Activated naive CD4-positive, alpha-beta T cell treated with anti-CD3 and anti-CD28 coated beads for 36 hours (primary cell): ENCODE measurements at regions of chr5 and their contacts with region 1.

Region 1: GRCh38 chr5:126676195-126676624 is 75.5 kb downstream of the PHAX start:
- DNase-seq: peak; percentile 85
- H3K4me3 Mint-ChIP-seq: no peak overlapping the region
- H3K27ac Mint-ChIP-seq: peak overlapping the region; percentile 67
- H3K4me1 Mint-ChIP-seq: peaks cover 4% of the 10 kb centered on the region
- H3K27me3 Mint-ChIP-seq: no peaks in the 10 kb centered on the region

Region 2: GRCh38 chr5:126686451-126687126 is 10.4 kb after region 1 on chr5:
- CTCF ChIA-PET with region 1: interaction called, 15 read pairs
- intact Hi-C with region 1: no loop called
- DNase-seq: no peak
- H3K4me3 Mint-ChIP-seq: no peak overlapping the region
- H3K27ac Mint-ChIP-seq: no peak overlapping the region
- H3K4me1 Mint-ChIP-seq: peaks cover 37% of the 10 kb centered on the region
- H3K27me3 Mint-ChIP-seq: no peaks in the 10 kb centered on the region

Region 3: DNA sequence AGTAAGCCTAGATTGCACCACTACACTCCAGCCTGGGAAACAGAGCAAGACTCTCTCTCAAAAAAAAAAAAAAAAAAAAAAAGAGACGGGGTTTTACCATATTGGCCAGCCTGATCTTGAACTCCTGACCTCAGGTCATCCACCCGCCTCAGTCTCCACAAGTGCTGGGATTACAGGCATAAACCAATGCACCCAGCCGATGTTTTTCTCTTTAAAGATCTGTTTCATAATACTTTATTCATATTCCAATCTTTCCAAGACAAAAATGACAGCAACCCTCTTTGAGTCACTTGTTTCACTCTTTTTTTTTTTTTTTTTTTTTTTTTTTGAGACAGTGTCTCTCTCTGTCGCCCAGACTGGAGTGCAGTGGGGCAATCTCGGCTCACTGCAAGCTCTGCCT is 87.2 kb after region 1 on chr5:
- CTCF ChIA-PET with region 1: interaction called, 3 read pairs
- intact Hi-C with region 1: loop called (anchors 5 kb)
- DNase-seq: no peak
- H3K4me3 Mint-ChIP-seq: no peak overlapping the region
- H3K27ac Mint-ChIP-seq: peak overlapping the region; percentile 53
- H3K4me1 Mint-ChIP-seq: peaks cover 44% of the 10 kb centered on the region
- H3K27me3 Mint-ChIP-seq: no peaks in the 10 kb centered on the region

Region 4: GRCh38 chr5:126852091-126852571 is 175.9 kb after region 1 on chr5:
- CTCF ChIA-PET with region 1: interaction called, 5 read pairs
- intact Hi-C with region 1: loop called (anchors 1 kb)
- DNase-seq: peak; percentile 24
- H3K4me3 Mint-ChIP-seq: no peak overlapping the region
- H3K27ac Mint-ChIP-seq: peak overlapping the region; percentile 81
- H3K4me1 Mint-ChIP-seq: peaks cover 50% of the 10 kb centered on the region
- H3K27me3 Mint-ChIP-seq: no peaks in the 10 kb centered on the region

Region 5: GRCh38 chr5:127313847-127314473 is 637.8 kb after region 1 on chr5:
- CTCF ChIA-PET with region 1: no interaction called
- intact Hi-C with region 1: loop called (anchors 1 kb)
- DNase-seq: peak; percentile 81
- H3K4me3 Mint-ChIP-seq: no peak overlapping the region
- H3K27ac Mint-ChIP-seq: no peak overlapping the region
- H3K4me1 Mint-ChIP-seq: peaks cover 4% of the 10 kb centered on the region
- H3K27me3 Mint-ChIP-seq: peaks cover under 1% of the 10 kb centered on the region